Naive thymus-derived CD4-positive, alpha-beta T cell (primary cell): ENCODE measurements at regions of chr13 and their contacts with region 1.

Region 1: DNA sequence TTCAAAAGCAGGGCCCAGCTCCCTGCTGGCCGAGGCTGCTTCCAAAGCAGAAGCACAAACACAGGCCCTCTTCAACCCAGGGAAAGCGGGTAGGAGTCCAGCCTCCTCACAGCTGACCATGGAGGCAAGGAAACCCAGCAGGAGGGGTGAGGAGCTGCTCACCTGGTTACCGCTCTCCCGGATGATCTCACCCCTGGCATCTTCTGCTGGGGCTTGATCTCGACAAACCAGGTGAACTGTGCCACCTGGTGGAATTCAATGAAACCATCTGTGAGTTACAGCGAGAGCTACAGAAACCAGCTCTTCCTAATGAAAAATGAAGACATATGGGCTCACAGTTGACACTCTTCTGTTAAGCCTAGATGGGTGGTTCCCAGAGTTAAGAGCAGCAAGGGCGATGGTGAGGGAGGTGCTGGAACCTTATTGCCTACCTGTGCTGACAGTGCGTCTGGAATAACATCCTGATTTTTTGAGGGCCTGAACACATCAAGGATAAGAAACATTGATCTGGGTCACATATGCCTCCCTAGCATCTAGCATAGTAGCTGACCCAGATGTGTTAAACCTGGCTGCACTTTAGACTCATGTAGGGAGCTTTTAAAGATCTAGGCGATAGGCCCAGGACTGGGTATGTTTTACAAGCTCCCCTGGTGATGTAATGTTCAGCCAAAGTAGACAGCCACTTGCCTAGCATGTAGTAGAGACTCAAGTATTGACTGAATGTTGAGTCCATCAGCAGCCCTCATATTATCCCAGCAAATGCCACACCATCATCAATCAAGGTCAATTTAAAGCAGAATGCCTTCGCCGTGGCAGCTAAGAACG is 6.1 kb downstream of the DHRS12 start:
- DNase-seq: peak in 8 of 9 donors; percentile 41 to 78 (median 66)
- ATAC-seq: peak; percentile 64
- H3K4me3 ChIP-seq: no peak overlapping the region
- H3K4me3 Mint-ChIP-seq: peak overlapping the region in 1 of 10 donors; percentile 13
- H3K27ac ChIP-seq: no peak overlapping the region
- H3K27ac Mint-ChIP-seq: peak overlapping the region in 8 of 9 donors; percentile 22 to 90 (median 69)
- H3K4me1 ChIP-seq: peaks cover 15% of the 10 kb centered on the region in 2 donors
- H3K4me1 Mint-ChIP-seq: peaks cover 19 to 42% (median 35%) of the 10 kb centered on the region in 7 donors
- H3K27me3 ChIP-seq: no peaks in the 10 kb centered on the region
- H3K27me3 Mint-ChIP-seq: no peaks in the 10 kb centered on the region

Region 2: GRCh38 chr13:51125498-51126226 is 672.2 kb before region 1 on chr13:
- CTCF ChIA-PET with region 1: interaction called, 7 read pairs
- POLR2A ChIA-PET with region 1: no interaction called
- intact Hi-C with region 1: loop called in 1 of 2 experiments (anchors 1 kb)
- DNase-seq: peak in 6 of 9 donors; percentile 11 to 41 (median 26)
- ATAC-seq: peak; percentile 80
- H3K4me3 ChIP-seq: no peak overlapping the region
- H3K4me3 Mint-ChIP-seq: no peak overlapping the region
- H3K27ac ChIP-seq: no peak overlapping the region
- H3K27ac Mint-ChIP-seq: no peak overlapping the region
- H3K4me1 ChIP-seq: no peaks in the 10 kb centered on the region
- H3K4me1 Mint-ChIP-seq: peaks cover 0 to 13% (median 0%) of the 10 kb centered on the region in 7 donors
- H3K27me3 ChIP-seq: no peaks in the 10 kb centered on the region
- H3K27me3 Mint-ChIP-seq: peaks cover 0 to 21% (median 13%) of the 10 kb centered on the region in 5 donors

Region 3: DNA sequence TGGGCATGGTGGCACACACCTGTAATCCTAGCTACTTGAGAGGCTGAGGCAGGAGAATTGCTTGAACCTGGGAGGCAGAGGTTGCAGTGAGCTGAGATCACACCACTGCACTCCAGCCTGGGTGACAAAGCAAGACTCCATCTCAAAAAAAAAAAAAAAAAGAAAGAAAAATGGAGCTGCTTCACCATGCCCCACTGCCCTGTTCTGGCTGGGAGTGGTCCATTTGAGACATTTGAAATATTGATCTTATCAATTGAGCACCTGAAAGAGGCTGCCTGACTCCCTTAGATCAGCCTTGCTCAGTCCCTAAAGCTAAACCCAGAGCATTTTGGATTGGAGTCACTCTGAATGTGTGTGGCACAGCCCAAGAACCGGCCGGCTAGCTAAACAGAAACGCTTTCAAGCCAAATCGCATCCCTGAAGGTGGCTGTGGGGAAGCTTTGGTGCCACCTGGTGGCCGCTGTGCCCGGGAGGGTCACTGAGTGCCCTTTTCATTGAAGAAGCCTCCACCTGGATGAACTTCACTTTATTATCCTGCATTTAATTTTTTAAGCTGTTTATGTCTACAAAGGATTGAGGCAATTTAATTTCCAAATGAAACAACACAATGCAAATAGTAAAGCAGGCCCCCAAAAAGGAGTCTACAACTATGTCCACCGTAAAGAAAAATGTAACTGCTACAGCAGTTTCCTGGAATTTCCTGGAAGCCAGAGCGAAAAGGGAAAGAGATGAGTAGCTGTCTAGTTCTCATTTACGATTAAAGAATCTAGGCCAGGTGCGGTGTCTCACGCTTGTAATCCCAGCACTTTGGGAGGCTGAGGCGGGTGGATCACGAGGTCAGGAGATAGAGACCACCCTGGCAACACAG is 511.5 kb before region 1 on chr13:
- CTCF ChIA-PET with region 1: interaction called, 6 read pairs
- POLR2A ChIA-PET with region 1: no interaction called
- intact Hi-C with region 1: loop called (anchors 1 kb)
- DNase-seq: peak; percentile 11 to 77 (median 46)
- ATAC-seq: peak; percentile 76
- H3K4me3 ChIP-seq: no peak overlapping the region
- H3K4me3 Mint-ChIP-seq: no peak overlapping the region
- H3K27ac ChIP-seq: no peak overlapping the region
- H3K27ac Mint-ChIP-seq: no peak overlapping the region
- H3K4me1 ChIP-seq: no peaks in the 10 kb centered on the region
- H3K4me1 Mint-ChIP-seq: peaks cover 0 to 25% (median 0%) of the 10 kb centered on the region in 7 donors
- H3K27me3 ChIP-seq: no peaks in the 10 kb centered on the region
- H3K27me3 Mint-ChIP-seq: peaks cover 0 to 9% (median 0%) of the 10 kb centered on the region in 5 donors

Region 4: DNA sequence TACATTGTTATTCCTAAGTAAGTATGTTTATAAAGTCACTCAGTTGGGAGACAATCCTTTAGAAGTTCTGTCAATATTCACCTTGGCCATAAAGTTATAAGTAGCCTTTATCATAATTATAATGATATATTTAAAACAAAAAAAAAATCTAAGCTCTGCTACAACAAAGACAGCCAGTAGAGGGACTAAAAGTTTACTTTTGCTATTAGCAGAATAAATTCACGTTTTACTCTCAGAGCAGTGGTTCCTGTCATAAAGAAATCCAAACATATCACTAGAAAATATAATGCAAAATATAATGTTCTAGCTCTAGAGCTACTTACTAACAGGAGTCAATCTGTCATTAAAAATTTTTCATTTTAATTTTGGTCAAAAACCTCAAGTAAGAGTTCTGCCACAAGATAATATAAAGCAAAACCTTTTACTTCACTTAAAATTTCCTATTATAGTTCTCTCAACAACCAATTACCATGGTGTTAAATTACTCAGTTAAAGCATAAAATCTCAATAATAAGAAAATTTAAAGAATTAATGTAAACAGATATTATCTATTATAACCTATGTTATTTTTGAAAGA is 362.8 kb before region 1 on chr13:
- CTCF ChIA-PET with region 1: interaction called, 54 read pairs
- POLR2A ChIA-PET with region 1: interaction called, 5 read pairs
- intact Hi-C with region 1: loop called (anchors 1 kb)
- DNase-seq: peak in 6 of 9 donors; percentile 19 to 50 (median 33)
- ATAC-seq: peak; percentile 47
- H3K4me3 ChIP-seq: no peak overlapping the region
- H3K4me3 Mint-ChIP-seq: no peak overlapping the region
- H3K27ac ChIP-seq: no peak overlapping the region
- H3K27ac Mint-ChIP-seq: peak overlapping the region in 1 of 9 donors; percentile 61
- H3K4me1 ChIP-seq: no peaks in the 10 kb centered on the region
- H3K4me1 Mint-ChIP-seq: peaks cover 8 to 47% (median 25%) of the 10 kb centered on the region in 7 donors
- H3K27me3 ChIP-seq: no peaks in the 10 kb centered on the region
- H3K27me3 Mint-ChIP-seq: no peaks in the 10 kb centered on the region

Region 5: GRCh38 chr13:51770681-51771417 is 27.0 kb before region 1 on chr13:
- CTCF ChIA-PET with region 1: no interaction called
- POLR2A ChIA-PET with region 1: no interaction called
- intact Hi-C with region 1: no loop called
- DNase-seq: no peak
- ATAC-seq: peak; percentile 16
- H3K4me3 ChIP-seq: no peak overlapping the region
- H3K4me3 Mint-ChIP-seq: no peak overlapping the region
- H3K27ac ChIP-seq: no peak overlapping the region
- H3K27ac Mint-ChIP-seq: peak overlapping the region in 5 of 9 donors; percentile 39 to 71 (median 48)
- H3K4me1 ChIP-seq: no peaks in the 10 kb centered on the region
- H3K4me1 Mint-ChIP-seq: peaks cover 0 to 10% (median 7%) of the 10 kb centered on the region in 7 donors
- H3K27me3 ChIP-seq: no peaks in the 10 kb centered on the region
- H3K27me3 Mint-ChIP-seq: no peaks in the 10 kb centered on the region

Region 6: GRCh38 chr13:51825165-51825592 is 27.3 kb after region 1 on chr13:
- CTCF ChIA-PET with region 1: interaction called, 14 read pairs
- POLR2A ChIA-PET with region 1: interaction called, 118 read pairs
- intact Hi-C with region 1: loop called (anchors 1 to 5 kb)
- DNase-seq: peak in 7 of 9 donors; percentile 62 to 90 (median 84)
- ATAC-seq: peak; percentile 81
- H3K4me3 ChIP-seq: peak overlapping the region; percentile 75
- H3K4me3 Mint-ChIP-seq: peak overlapping the region; percentile 62 to 100 (median 97)
- H3K27ac ChIP-seq: peak overlapping the region; percentile 85
- H3K27ac Mint-ChIP-seq: peak overlapping the region; percentile 86 to 99 (median 95)
- H3K4me1 ChIP-seq: peaks cover 61 to 78% of the 10 kb centered on the region in 2 donors
- H3K4me1 Mint-ChIP-seq: peaks cover 57 to 80% (median 63%) of the 10 kb centered on the region in 7 donors
- H3K27me3 ChIP-seq: no peaks in the 10 kb centered on the region
- H3K27me3 Mint-ChIP-seq: peaks cover 0 to 10% (median 0%) of the 10 kb centered on the region in 5 donors